Posterior vena cava (tissue), 2 donors: ENCODE measurements at regions of chr7 and their contacts with region 1.

Region 1: DNA sequence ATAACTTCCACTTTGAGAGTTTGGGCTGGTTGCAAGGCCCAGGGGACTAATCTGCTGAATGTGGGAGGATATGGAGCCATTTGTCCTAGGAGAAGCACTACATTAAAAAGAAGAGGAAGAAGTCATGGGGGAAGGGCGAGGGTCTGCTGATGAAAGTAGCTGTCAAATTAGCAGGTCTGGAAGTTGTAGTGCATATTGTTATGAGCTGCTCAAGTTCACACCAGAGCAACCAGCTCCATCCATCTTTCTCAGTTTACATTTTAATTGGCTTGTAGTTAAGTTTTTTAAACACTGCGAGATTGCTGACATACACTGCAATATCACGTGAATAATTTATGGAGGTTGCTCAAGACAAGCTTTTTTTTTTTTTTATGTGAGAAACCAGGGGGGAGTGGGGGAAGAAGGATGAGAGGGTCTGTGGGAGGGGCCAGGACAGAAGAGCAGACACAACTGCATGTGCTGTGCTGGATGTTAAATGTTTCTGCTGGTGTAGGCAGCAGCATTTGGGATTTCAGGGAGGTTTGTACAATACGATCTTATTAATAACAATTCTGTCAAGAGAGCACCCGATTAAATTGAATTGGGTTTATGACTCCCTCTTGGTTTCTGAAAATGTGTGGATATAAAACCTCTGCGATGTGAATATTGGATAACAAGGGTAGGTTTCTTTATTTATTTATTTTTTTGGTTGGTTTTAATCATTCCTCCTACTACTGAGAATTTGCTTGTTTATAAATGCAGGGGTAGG is 759.0 kb upstream of the GALNT17 start:
- DNase-seq: no peak

Region 2: DNA sequence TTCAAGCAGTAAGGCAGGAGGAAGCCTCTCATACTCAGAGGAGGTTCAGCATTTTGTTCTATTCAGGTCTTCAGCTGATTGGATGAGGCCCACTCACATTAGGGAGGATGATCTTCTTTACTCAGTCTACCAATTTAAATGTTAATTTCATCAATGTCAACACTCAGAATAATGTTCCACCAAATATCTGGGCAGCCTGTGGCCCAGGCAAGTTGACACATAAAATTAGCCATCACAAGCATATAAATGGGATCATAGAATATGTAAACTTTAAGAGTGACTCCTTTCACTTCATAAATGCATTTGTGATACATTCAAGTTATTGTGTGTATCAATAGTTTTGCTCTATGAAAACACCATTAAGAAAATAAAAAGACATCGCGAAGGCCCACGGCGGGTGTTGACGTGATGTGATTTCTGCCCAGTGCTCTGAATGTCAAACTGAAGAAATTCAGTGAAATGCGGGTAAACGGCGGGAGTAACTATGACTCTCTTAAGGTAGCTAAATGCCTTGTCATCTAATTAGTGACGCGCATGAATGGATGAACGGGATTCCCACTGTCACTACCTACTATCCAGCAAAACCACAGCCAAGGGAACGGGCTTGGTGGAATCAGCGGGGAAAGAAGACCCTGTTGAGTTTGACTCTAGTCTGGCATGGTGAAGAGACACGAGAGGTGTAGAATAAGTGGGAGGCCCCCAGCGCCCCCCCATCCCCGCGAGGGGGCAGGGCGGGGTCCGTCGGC is 1310.7 kb before region 1 on chr7:
- intact Hi-C with region 1: no loop called
- DNase-seq: no peak

Region 3: DNA sequence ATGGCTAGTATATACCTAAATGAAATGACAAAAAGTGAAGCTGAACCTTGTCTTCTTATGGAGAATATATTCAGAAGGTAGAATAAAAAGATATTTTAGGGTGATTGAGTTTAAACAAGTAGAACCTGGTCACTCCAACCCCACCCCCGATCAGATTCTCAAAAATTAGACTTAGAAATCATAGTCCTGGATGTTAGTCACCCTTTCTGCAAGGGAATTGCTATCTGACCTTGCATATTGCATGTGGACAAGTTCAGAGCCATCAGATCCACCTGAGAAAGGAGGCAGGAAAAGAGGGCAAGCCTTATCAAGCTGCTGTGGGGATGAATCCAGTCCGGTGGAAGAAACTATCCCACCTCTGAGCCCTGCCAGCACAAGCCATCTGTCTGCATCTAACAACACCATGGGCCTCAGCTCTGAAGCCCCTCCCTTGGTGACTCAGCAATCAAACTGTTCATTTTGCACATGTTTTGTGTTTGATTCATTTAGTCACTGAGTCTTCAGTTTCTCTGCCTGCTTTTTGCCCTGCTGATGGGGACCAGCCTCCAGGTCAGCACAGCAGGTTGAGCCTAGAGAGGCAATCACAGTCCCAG is 47.3 kb before region 1 on chr7:
- intact Hi-C with region 1: loop called in 1 of 2 experiments (anchors 2 kb)
- DNase-seq: no peak

Region 4: DNA sequence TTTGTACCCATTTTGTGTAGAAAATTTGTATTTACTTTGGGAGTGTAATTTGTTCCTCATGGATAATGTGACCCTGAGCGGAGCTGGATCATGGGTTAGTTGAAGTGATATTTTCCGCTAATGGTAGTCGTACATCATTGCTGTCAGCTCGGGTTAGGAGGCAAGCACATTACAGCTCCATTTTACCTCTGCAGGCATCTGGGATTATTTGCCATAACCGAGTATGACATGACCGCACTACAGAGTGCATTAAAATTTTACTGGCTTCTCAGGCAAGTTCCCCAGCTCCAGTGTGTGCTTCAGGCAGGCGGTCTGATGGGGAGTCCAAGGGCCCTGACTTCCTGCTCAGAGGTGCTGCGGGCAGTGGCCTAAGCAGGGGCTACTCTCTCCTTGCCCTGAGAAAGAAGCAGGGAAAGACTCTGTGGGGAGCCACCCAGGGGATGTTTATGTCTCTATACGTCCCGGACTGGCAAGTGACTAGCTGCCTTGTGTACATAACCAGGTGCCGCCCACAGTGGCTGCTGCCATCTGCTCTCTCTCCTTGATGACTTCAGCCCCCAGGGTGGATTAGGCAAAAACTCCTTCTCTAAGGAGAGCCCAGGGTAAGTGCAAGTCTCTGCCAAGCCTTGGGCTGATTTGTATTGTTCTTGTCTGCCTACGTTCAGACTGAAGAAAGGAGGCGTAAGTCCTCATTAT is 73.7 kb after region 1 on chr7:
- intact Hi-C with region 1: no loop called
- DNase-seq: no peak